ENCODE measurements at regions of chr17 and their contacts with region 1.

Region 1: GRCh38 chr17:64036198-64036922 is 15.9 kb upstream of the ICAM2 start:
- DNase-seq: no peak
- ATAC-seq: no peak
- H3K4me3 ChIP-seq: no peak overlapping the region
- H3K27ac ChIP-seq: no peak overlapping the region
- H3K4me1 ChIP-seq: no peaks in the 10 kb centered on the region
- H3K27me3 ChIP-seq: no peaks in the 10 kb centered on the region
- CTCF ChIP-seq: no peak
- POLR2A ChIP-seq: no peak

Region 2: GRCh38 chr17:63984651-63985386 is 51.5 kb before region 1 on chr17:
- in situ Hi-C with region 1: no loop called
- intact Hi-C with region 1: no loop called
- DNase-seq: peak; percentile 84 to 94
- ATAC-seq: peak; percentile 54 to 55
- H3K4me3 ChIP-seq: peak overlapping the region in 2 of 4 donors; percentile 4 to 23
- H3K27ac ChIP-seq: peak overlapping the region; percentile 98 to 100 (median 99)
- H3K4me1 ChIP-seq: peaks cover 75 to 76% of the 10 kb centered on the region in 2 donors
- H3K27me3 ChIP-seq: no peaks in the 10 kb centered on the region
- CTCF ChIP-seq: peak in 1 of 5 experiments; percentile 3
- POLR2A ChIP-seq: peak; percentile 36 to 44

Region 3: DNA sequence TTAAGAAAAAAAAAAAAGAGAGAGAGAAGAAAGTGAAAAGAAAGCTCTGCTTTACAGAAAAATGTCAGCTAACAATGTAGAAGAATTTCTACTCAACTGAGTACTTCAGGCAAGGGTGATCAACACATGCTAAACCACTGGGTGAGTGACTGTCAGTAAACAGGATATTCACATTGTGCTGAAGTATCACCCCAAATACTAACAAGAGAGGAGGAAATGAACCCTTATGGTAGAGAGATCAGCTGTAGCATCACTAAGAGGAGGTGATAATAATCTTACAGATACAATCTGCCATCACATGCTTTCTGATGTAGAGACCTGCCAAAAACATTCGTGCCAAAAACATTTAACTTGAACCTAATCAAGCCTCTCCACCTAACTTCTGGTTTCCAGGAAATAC is 14.8 kb after region 1 on chr17:
- in situ Hi-C with region 1: no loop called
- intact Hi-C with region 1: no loop called
- DNase-seq: no peak
- ATAC-seq: no peak
- H3K4me3 ChIP-seq: no peak overlapping the region
- H3K27ac ChIP-seq: no peak overlapping the region
- H3K4me1 ChIP-seq: no peaks in the 10 kb centered on the region
- H3K27me3 ChIP-seq: no peaks in the 10 kb centered on the region
- CTCF ChIP-seq: no peak
- POLR2A ChIP-seq: no peak

Region 4: GRCh38 chr17:64129764-64130558 is 93.6 kb after region 1 on chr17 and contains the start of gene ERN1:
- in situ Hi-C with region 1: loop called in 1 of 4 experiments (anchors 10 kb)
- intact Hi-C with region 1: no loop called
- DNase-seq: peak; percentile 87 to 93
- ATAC-seq: peak; percentile 85 to 88
- H3K4me3 ChIP-seq: peak within 1 kb of the TSS; percentile 60 to 85 (median 78)
- H3K27ac ChIP-seq: peak within 1 kb of the TSS; percentile 88 to 95 (median 92)
- H3K4me1 ChIP-seq: peaks cover 17 to 21% of the 10 kb centered on the region in 2 donors
- H3K27me3 ChIP-seq: no peaks in the 10 kb centered on the region
- CTCF ChIP-seq: peak in 2 of 5 experiments; percentile 3 to 15
- POLR2A ChIP-seq: peak; percentile 89 to 94
- total RNA-seq, gene ERN1: 9.7 to 27.5 (median 13.8) TPM